ENCODE measurements at regions of chr16 and their contacts with region 1.

Region 1: DNA sequence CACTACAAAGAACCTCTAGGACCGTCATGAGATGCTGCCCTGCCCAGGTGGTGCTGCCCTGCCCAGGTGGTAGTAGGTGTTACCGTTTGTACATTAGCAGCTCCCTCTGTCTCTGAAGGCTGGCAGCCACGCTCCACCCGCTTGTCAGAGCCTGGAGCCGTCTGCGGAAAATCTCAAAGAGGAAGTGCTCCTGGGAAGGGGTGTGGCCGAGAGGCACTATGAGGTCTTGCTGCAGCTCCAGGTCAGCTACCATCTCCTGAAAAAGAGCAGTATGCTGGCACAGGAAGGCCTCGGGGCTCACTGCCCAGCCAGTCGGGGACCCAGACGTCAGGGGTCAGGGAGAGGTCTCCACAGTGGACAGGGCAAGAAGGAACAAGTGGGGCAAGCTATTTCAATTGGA is 28.3 kb downstream of the ZNF276 start:
- DNase-seq: no peak
- H3K4me3 ChIP-seq: no peak overlapping the region
- H3K27ac ChIP-seq: no peak overlapping the region
- H3K4me1 ChIP-seq: no peaks in the 10 kb centered on the region
- H3K27me3 ChIP-seq: no peaks in the 10 kb centered on the region
- CTCF ChIP-seq: no peak

Region 2: DNA sequence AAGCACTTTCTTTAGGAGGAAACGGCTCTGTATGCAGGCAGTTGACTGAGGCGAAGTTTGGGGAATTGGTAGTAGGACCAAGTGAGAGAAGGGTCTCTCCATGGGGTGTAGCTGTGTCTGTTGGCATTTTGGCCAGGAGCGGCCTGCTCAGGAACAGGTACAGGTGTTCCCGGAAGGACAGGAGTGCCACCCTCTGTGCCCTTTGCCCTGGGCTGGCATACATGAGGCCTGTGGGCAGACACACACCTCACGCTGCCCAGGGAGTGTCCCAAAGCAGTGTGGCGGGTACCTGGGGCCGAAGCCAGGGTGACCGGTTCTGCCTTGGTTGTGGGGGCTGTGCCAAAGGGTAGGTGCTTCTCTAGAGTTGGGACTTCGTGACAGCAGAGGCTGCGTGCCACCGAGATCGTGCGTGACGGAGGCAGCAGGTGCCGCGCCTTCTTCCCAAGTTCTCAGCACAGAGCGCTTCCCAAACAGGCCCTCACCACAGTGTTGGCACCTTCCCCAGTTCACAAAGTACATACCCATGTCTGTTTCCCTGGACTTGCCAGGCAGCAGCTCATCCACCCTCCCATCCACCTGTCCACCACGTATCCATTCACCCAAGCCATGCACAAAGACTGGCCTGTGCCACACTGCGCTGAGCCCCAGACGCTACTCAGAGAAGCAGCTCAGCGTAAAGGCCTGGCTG is 103.8 kb after region 1 on chr16:
- intact Hi-C with region 1: loop called (anchors 10 kb)
- DNase-seq: no peak
- H3K4me3 ChIP-seq: no peak overlapping the region
- H3K27ac ChIP-seq: no peak overlapping the region
- H3K4me1 ChIP-seq: no peaks in the 10 kb centered on the region
- H3K27me3 ChIP-seq: no peaks in the 10 kb centered on the region
- CTCF ChIP-seq: no peak